Dorsolateral prefrontal cortex (tissue), 120 donors: ENCODE measurements at regions of chr17 and their contacts with region 1.

Region 1: GRCh38 chr17:67824735-67825626 is at the start of gene BPTF:
- DNase-seq: peak; percentile 76 to 93 (median 87)
- H3K4me3 ChIP-seq: peak within 1 kb of the TSS; percentile 59 to 86 (median 76)
- H3K27ac ChIP-seq: peak within 1 kb of the TSS in 58 of 59 donors; percentile 32 to 97 (median 92)
- H3K27me3 ChIP-seq: no peaks in the 10 kb centered on the region
- CTCF ChIP-seq: peak; percentile 57 to 98 (median 88)
- total RNA-seq, gene BPTF: 107 to 224 (median 155) TPM

Region 2: GRCh38 chr17:67366193-67367157 is 458.5 kb before region 1 on chr17 and contains the start of gene PSMD12:
- intact Hi-C with region 1: loop called in 1 of 2 experiments (anchors 10 kb)
- DNase-seq: peak; percentile 88 to 96 (median 94)
- H3K4me3 ChIP-seq: peak within 1 kb of the TSS; percentile 62 to 100 (median 92)
- H3K27ac ChIP-seq: peak within 1 kb of the TSS; percentile 60 to 96 (median 88)
- H3K27me3 ChIP-seq: no peaks in the 10 kb centered on the region
- CTCF ChIP-seq: peak in 49 of 56 donors; percentile 10 to 67 (median 39)
- total RNA-seq, gene PSMD12: 32.9 to 84.7 (median 64.1) TPM

Region 3: DNA sequence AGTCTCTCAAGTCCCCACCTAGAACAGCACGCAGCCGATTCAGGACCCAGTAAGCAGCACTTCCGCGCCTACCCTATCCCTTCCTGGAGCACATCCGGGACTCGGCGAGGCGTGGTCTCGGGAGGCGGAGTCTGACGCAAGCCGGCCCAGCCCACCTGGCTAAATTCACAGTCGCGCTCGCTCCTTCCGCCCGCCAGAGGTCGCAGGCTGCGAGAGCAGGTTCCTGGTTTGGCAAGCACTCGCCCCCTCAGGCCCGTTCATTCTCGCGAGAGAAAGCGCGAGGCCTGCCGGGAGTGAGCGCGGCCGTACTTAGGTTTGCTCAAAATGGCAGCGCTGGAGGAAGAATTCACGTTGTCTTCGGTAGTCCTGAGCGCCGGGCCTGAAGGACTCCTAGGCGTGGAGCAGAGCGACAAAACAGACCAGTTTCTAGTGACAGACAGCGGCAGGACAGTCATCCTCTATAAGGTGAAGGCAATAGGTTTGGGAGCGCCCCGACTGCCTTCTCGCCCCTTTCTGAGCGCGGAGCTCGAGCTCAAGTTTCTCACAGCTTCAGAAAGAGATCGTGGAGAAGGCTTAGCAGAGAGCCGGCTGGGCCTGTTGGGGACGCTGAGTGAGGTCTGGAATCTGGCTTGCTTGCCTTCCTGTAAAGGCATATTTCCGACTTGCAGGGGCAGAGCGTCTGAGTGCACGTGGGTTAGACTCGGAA is 107.2 kb before region 1 on chr17 and contains the start of gene NOL11:
- intact Hi-C with region 1: loop called (anchors 2 to 5 kb)
- DNase-seq: peak; percentile 99 to 100 (median 100)
- H3K4me3 ChIP-seq: peak within 1 kb of the TSS; percentile 61 to 100 (median 87)
- H3K27ac ChIP-seq: peak within 1 kb of the TSS; percentile 45 to 96 (median 87)
- H3K27me3 ChIP-seq: no peaks in the 10 kb centered on the region
- CTCF ChIP-seq: peak; percentile 78 to 99 (median 95)
- total RNA-seq, gene NOL11: 16.2 to 36.1 (median 25.5) TPM

Region 4: GRCh38 chr17:67902511-67903231 is 77.7 kb after region 1 on chr17:
- intact Hi-C with region 1: loop called in 1 of 2 experiments (anchors 10 kb)
- DNase-seq: no peak
- H3K4me3 ChIP-seq: peak overlapping the region in 29 of 59 donors; percentile 0 to 47 (median 9)
- H3K27ac ChIP-seq: peak overlapping the region in 46 of 59 donors; percentile 4 to 77 (median 48)
- H3K27me3 ChIP-seq: no peaks in the 10 kb centered on the region
- CTCF ChIP-seq: no peak

Region 5: DNA sequence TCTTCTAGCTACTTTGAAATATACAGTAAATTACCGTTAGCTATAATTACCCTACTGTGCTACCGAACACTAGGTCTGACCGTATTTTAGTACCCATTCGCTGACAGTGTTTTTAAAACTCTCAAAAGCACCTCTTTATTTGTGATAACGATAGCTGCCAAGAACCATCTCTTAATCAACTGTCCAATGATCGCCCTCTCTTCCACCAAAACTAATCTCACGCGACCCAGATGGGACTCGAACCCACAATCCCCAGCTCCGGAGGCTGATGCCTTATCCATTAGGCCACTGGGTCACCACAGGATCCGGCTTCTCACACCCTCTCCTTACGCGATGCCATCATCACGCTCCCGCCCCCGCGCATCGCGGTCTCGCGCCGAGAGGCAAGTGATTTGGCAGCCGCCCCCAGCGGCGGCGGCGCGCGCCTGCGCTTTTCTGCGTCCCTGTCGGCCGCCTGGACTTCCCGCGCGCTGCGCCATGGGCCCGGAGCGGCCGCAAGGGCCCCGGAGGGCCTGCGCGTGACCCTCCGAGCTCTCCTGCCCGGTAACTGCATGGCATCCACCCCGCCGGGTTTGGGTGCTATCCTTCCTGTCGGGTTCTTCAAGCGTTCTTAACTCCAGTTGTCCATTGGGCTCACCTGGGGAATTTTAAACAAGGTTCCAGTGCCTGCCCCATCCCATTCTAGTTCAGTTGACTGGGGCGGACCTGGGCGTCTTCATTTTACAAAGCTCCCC is 194.9 kb after region 1 on chr17:
- intact Hi-C with region 1: loop called (anchors 10 kb)
- DNase-seq: peak; percentile 93 to 98 (median 96)
- H3K4me3 ChIP-seq: peak overlapping the region; percentile 42 to 98 (median 78)
- H3K27ac ChIP-seq: peak overlapping the region; percentile 59 to 98 (median 93)
- H3K27me3 ChIP-seq: no peaks in the 10 kb centered on the region
- CTCF ChIP-seq: peak in 53 of 56 donors; percentile 1 to 73 (median 50)

Region 6: GRCh38 chr17:68089887-68090286 is 264.9 kb after region 1 on chr17:
- intact Hi-C with region 1: loop called in 1 of 2 experiments (anchors 10 kb)
- DNase-seq: peak in 1 of 10 donors; percentile 57
- H3K4me3 ChIP-seq: no peak overlapping the region
- H3K27ac ChIP-seq: no peak overlapping the region
- H3K27me3 ChIP-seq: no peaks in the 10 kb centered on the region
- CTCF ChIP-seq: no peak